ENCODE measurements at regions of chr2 and their contacts with region 1.

Region 1: DNA sequence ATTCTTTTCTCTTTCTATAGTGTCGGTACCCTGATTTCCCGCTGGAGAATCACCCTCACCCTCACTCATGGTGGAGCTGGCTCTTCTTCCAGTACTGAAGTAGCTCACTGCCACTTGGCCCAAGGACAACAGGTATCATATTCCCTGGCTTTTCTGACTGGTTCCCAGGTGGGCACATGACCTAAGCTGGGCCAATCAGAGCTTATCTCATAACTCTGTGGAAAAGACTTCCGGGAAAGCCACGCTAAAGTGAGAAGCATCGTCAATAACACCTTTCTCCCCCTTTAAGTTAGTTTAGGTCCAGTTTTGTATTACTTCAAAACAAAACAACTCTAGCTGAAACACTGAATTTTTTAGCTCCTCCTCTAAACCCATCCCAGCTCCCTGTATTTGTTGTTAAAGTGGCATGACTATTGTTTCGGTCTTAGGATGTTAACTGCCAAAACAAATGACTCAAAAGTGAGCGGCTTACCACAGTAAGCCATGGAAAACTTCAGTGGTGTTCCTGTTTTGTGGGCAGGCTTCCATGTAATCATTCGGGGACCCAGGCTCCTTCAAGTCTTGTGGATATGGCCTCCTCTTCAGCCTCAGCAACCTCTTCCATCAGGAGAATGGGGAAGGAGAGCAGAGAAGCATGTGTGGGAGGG is 137.4 kb upstream of the DLX2 start:
- DNase-seq: no peak
- H3K4me3 ChIP-seq: no peak overlapping the region
- H3K27ac ChIP-seq: no peak overlapping the region
- H3K4me1 ChIP-seq: peaks cover 0 to 6% (median 4%) of the 10 kb centered on the region in 4 donors
- H3K27me3 ChIP-seq: peaks cover 0 to 28% of the 10 kb centered on the region in 2 donors
- CTCF ChIP-seq: no peak

Region 2: GRCh38 chr2:171999604-172000469 is 240.2 kb before region 1 on chr2 and contains the start of gene METAP1D:
- intact Hi-C with region 1: no loop called
- DNase-seq: peak; percentile 71 to 91
- H3K4me3 ChIP-seq: peak within 1 kb of the TSS; percentile 59 to 60
- H3K27ac ChIP-seq: no peak within 1 kb of the TSS
- H3K4me1 ChIP-seq: peaks cover 0 to 11% (median 3%) of the 10 kb centered on the region in 4 donors
- H3K27me3 ChIP-seq: peaks cover 0 to 2% of the 10 kb centered on the region in 2 donors
- CTCF ChIP-seq: no peak

Region 3: GRCh38 chr2:172153156-172153555 is 86.9 kb before region 1 on chr2:
- intact Hi-C with region 1: loop called (anchors 1 kb)
- DNase-seq: no peak
- H3K4me3 ChIP-seq: no peak overlapping the region
- H3K27ac ChIP-seq: no peak overlapping the region
- H3K4me1 ChIP-seq: no peaks in the 10 kb centered on the region
- H3K27me3 ChIP-seq: peaks cover 0 to 18% of the 10 kb centered on the region in 2 donors
- CTCF ChIP-seq: no peak